Endothelial cell of umbilical vein (primary cell): ENCODE measurements at regions of chr10 and their contacts with region 1.

Region 1: DNA sequence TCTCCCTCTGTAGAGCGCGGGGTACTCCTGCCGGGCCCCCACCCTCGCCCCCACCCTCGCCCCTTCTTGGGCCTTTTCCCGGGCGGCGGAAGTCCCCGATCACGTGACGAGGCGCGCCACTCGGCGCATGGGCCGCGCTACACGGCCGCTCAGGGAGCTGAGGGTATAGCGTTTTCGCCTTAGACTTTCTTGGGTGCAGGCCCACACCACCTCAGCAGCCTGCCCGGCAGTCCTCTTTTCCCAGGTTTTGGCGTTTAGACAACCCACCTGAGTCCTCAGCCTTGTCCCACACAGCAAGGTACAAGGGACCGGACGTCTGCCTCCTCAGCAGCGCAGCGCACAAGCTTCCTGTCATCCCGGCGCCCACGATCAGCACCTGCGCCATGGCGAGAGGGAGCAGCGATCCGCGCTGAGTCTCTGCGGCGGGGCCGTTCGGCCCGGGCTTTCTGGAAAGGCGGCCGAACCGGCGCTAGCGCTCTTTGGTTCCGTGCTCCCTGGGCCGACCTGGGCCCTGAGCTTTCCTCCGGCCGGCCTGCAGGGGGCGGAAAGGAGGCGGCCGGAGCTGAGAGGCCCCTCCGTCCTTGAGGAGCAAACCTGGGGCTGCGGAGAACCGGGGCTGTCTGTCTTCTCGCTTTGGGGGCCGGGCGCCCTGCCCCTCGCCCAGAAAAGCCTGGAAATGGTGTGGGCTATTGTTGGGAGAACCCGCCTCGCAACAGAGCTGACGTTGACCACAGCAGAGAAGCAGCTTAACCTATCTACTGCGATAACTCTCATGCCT is at the start of gene RNLS:
- DNase-seq: peak; percentile 73
- H3K4me3 ChIP-seq: peak within 1 kb of the TSS; percentile 42 to 62 (median 47)
- H3K27ac ChIP-seq: peak within 1 kb of the TSS; percentile 0
- H3K4me1 ChIP-seq: peaks cover 4% of the 10 kb centered on the region
- H3K27me3 ChIP-seq: no peaks in the 10 kb centered on the region
- CTCF ChIP-seq: peak; percentile 81 to 93
- POLR2A ChIP-seq: no peak
- total RNA-seq, gene RNLS: 2.5 and 3.6 TPM in 2 replicates

Region 2: DNA sequence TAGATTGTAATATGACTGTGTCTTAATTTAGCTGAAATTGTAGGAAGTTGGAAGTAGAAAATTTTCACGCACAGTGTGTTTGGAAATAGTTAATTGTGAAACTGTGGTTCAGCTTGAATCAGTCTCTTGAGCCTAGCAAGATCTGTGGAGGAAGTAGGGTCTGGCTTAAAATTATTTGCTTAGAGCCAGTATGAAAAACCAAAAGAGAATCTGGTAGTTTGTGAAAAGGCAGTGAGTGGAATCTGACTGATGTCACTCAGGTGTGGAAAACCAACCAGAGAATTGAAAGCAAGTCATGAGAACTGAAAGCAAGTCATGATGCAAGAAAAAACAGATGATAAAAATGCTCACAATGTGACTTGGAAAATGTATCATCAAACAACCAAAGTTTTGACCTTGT is 15.1 kb after region 1 on chr10:
- CTCF ChIA-PET with region 1: interaction called, 12 read pairs
- POLR2A ChIA-PET with region 1: no interaction called
- dilution Hi-C with region 1: no loop called
- intact Hi-C with region 1: no loop called
- DNase-seq: no peak
- H3K4me3 ChIP-seq: no peak overlapping the region
- H3K27ac ChIP-seq: no peak overlapping the region
- H3K4me1 ChIP-seq: no peaks in the 10 kb centered on the region
- H3K27me3 ChIP-seq: no peaks in the 10 kb centered on the region
- CTCF ChIP-seq: no peak
- POLR2A ChIP-seq: no peak

Region 3: GRCh38 chr10:88651101-88651551 is 68.1 kb after region 1 on chr10:
- CTCF ChIA-PET with region 1: interaction called, 16 read pairs
- POLR2A ChIA-PET with region 1: no interaction called
- dilution Hi-C with region 1: no loop called
- intact Hi-C with region 1: loop called (anchors 5 kb)
- DNase-seq: peak; percentile 82
- H3K4me3 ChIP-seq: no peak overlapping the region
- H3K27ac ChIP-seq: peak overlapping the region; percentile 76
- H3K4me1 ChIP-seq: peaks cover 30% of the 10 kb centered on the region
- H3K27me3 ChIP-seq: no peaks in the 10 kb centered on the region
- CTCF ChIP-seq: no peak
- POLR2A ChIP-seq: peak; percentile 21

Region 4: GRCh38 chr10:88687853-88688467 is 105.0 kb after region 1 on chr10:
- CTCF ChIA-PET with region 1: interaction called, 24 read pairs
- POLR2A ChIA-PET with region 1: no interaction called
- dilution Hi-C with region 1: no loop called
- intact Hi-C with region 1: no loop called
- DNase-seq: peak; percentile 31
- H3K4me3 ChIP-seq: no peak overlapping the region
- H3K27ac ChIP-seq: no peak overlapping the region
- H3K4me1 ChIP-seq: no peaks in the 10 kb centered on the region
- H3K27me3 ChIP-seq: no peaks in the 10 kb centered on the region
- CTCF ChIP-seq: peak; percentile 45 to 53
- POLR2A ChIP-seq: no peak

Region 5: GRCh38 chr10:88693392-88694020 is 110.5 kb after region 1 on chr10:
- CTCF ChIA-PET with region 1: interaction called, 24 read pairs
- POLR2A ChIA-PET with region 1: no interaction called
- dilution Hi-C with region 1: no loop called
- intact Hi-C with region 1: no loop called
- DNase-seq: peak; percentile 30
- H3K4me3 ChIP-seq: no peak overlapping the region
- H3K27ac ChIP-seq: no peak overlapping the region
- H3K4me1 ChIP-seq: no peaks in the 10 kb centered on the region
- H3K27me3 ChIP-seq: no peaks in the 10 kb centered on the region
- CTCF ChIP-seq: peak in 1 of 2 donors; percentile 6
- POLR2A ChIP-seq: no peak

Region 6: GRCh38 chr10:88791924-88792323 is 208.9 kb after region 1 on chr10:
- CTCF ChIA-PET with region 1: interaction called, 12 read pairs
- POLR2A ChIA-PET with region 1: no interaction called
- dilution Hi-C with region 1: no loop called
- intact Hi-C with region 1: no loop called
- DNase-seq: peak; percentile 33
- H3K4me3 ChIP-seq: no peak overlapping the region
- H3K27ac ChIP-seq: no peak overlapping the region
- H3K4me1 ChIP-seq: no peaks in the 10 kb centered on the region
- H3K27me3 ChIP-seq: no peaks in the 10 kb centered on the region
- CTCF ChIP-seq: peak; percentile 49 to 67
- POLR2A ChIP-seq: no peak

Region 7: DNA sequence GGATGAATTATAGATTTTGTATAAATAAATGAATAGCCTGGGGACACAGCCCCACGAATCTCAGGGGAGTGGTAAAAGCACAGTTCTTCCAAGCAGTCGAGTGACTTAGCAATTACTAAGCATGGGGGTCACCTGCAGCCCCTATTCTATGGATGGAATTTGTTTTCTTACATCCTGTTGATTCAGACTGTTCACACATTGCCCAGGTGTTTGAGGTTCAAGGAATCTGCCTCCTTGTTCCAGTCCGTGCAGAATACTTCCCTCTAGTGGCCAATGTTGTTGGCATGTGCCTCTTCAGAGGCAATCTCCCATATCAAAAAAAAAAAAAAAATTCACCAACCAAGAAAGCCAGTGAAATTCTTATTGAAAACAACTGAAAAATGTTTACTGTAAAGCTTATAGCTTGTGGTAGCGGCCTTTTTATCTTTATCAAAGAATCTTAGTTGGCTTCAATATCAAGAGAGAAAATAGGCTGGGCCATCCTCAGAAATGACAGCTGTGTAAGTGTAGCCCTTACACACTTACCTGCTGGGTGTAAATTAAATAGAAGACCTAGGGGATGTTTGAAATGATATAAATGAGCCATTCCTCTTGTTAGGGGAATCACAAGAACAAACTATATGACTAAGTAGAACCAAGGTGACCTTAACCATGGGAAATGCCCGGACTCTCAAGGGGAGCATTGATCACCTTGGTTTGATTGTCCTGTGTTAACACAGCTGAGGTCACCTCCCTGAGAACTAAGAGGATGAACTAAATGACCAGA is 227.4 kb after region 1 on chr10:
- CTCF ChIA-PET with region 1: interaction called, 6 read pairs
- POLR2A ChIA-PET with region 1: no interaction called
- dilution Hi-C with region 1: no loop called
- intact Hi-C with region 1: loop called (anchors 5 kb)
- DNase-seq: peak; percentile 64
- H3K4me3 ChIP-seq: no peak overlapping the region
- H3K27ac ChIP-seq: no peak overlapping the region
- H3K4me1 ChIP-seq: peaks cover 3% of the 10 kb centered on the region
- H3K27me3 ChIP-seq: no peaks in the 10 kb centered on the region
- CTCF ChIP-seq: peak; percentile 69 to 72
- POLR2A ChIP-seq: no peak